PC-3 (cell line): ENCODE measurements at regions of chr18 and their contacts with region 1.

Region 1: DNA sequence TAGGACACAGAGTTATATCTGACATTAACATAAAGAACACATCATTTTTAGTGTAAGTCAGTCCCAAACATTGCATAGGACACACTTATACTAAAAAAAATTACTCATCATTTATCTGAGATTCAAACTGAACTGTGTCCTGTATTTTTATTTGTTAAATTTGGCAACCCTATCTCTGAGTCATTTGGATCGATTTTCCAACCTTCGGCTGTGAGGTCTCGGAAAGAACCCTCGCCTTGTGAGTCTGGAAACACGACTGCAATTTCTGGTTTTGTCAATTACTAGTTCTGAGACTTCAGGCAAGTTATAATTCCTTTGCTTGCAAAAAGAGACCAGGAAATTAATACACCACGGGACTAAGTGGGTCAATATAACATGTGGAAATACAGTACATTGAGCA is 14.0 kb downstream of the ATP8B1 start:
- DNase-seq: peak; percentile 93
- ATAC-seq: peak; percentile 65
- H3K4me3 ChIP-seq: peak overlapping the region; percentile 48
- H3K27ac ChIP-seq: peak overlapping the region; percentile 96
- H3K4me1 ChIP-seq: peaks cover 59% of the 10 kb centered on the region
- H3K27me3 ChIP-seq: no peaks in the 10 kb centered on the region
- CTCF ChIP-seq: no peak

Region 2: DNA sequence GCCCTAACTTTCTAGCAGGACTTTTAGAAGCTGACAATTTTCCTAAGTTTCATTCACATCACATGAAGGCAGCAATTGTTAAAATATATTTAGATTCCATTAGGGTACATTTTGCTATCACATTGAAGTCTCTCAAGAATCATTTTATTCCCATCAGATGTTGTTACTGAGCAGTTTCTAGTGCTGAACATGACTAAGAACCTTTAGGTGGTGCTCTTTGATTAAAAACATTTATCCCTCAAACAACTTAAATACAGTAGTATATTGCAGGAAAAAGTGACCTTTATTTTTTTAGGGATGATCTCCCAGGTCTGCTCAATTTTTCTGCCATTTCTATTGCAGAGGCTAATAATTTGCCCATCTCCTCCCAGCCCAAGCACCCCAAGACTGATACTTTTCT is 144.6 kb before region 1 on chr18:
- CTCF ChIA-PET with region 1: no interaction called
- POLR2A ChIA-PET with region 1: interaction called, 3 read pairs
- intact Hi-C with region 1: loop called (anchors 5 kb)
- DNase-seq: peak; percentile 41
- ATAC-seq: peak; percentile 73
- H3K4me3 ChIP-seq: no peak overlapping the region
- H3K27ac ChIP-seq: no peak overlapping the region
- H3K4me1 ChIP-seq: peaks cover 4% of the 10 kb centered on the region
- H3K27me3 ChIP-seq: no peaks in the 10 kb centered on the region
- CTCF ChIP-seq: peak; percentile 56

Region 3: GRCh38 chr18:57768537-57769326 is 20.4 kb before region 1 on chr18:
- CTCF ChIA-PET with region 1: no interaction called
- POLR2A ChIA-PET with region 1: no interaction called
- intact Hi-C with region 1: loop called (anchors 2 kb)
- DNase-seq: peak; percentile 59
- ATAC-seq: peak; percentile 86
- H3K4me3 ChIP-seq: no peak overlapping the region
- H3K27ac ChIP-seq: peak overlapping the region; percentile 63
- H3K4me1 ChIP-seq: peaks cover 45% of the 10 kb centered on the region
- H3K27me3 ChIP-seq: no peaks in the 10 kb centered on the region
- CTCF ChIP-seq: no peak